Cardiac septum (tissue), 1 donor: ENCODE measurements at regions of chr2 and their contacts with region 1.

Region 1: GRCh38 chr2:24245986-24246776 is 71.3 kb downstream of the FAM228A start:
- DNase-seq: no peak

Region 2: GRCh38 chr2:23954325-23955014 is 291.7 kb before region 1 on chr2:
- intact Hi-C with region 1: no loop called
- DNase-seq: no peak

Region 3: DNA sequence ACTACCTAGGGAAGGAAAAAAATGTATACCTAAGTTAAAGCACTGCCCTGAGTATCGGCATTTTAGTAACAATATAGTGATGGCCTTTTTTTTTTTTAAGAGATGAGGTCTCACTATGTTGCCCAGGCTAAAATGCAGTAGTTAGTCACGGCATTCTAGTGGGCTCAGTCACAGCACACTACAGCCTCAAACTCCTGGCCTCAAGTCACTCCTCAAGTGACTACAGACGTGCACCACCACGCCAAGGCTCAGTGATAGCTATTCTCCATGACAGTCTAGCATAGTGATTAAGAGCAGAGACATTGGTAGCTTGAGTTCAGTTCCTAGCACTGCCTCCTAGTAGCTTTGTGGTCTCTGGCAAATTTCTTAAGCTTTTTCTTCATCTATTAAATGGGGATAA is 278.3 kb before region 1 on chr2:
- intact Hi-C with region 1: no loop called
- DNase-seq: no peak

Region 4: GRCh38 chr2:24297663-24298062 is 51.5 kb after region 1 on chr2:
- intact Hi-C with region 1: loop called (anchors 10 kb)
- DNase-seq: no peak